Adrenal gland (tissue), 19 donors: ENCODE measurements at regions of chr1 and their contacts with region 1.

Region 1: DNA sequence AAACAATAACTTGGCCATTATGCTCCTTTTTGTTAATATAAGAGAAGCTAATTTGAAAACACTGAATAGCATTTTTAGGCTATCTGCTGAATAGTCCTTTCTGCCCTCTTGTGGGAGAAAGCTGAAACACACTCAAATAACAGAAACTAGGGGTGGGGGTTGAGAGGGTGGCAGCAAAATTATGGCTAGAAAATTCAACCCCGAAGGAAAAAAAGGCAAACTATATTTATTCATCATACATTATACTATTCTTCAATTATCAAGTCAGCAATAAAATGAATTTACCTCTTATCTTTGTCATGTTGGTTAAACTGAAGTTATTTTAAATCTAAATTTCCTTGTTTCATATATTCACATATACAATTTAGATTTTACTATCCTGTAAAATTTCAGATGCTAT is 255.9 kb downstream of the FAF1 start:
- DNase-seq: peak in 2 of 7 donors; percentile 16 to 27
- H3K4me3 ChIP-seq: no peak overlapping the region
- H3K27ac ChIP-seq: no peak overlapping the region
- H3K4me1 ChIP-seq: peaks cover 0 to 6% of the 10 kb centered on the region in 2 donors
- H3K27me3 ChIP-seq: no peaks in the 10 kb centered on the region
- CTCF ChIP-seq: peak; percentile 48 to 74 (median 60)
- POLR2A ChIP-seq: no peak

Region 2: DNA sequence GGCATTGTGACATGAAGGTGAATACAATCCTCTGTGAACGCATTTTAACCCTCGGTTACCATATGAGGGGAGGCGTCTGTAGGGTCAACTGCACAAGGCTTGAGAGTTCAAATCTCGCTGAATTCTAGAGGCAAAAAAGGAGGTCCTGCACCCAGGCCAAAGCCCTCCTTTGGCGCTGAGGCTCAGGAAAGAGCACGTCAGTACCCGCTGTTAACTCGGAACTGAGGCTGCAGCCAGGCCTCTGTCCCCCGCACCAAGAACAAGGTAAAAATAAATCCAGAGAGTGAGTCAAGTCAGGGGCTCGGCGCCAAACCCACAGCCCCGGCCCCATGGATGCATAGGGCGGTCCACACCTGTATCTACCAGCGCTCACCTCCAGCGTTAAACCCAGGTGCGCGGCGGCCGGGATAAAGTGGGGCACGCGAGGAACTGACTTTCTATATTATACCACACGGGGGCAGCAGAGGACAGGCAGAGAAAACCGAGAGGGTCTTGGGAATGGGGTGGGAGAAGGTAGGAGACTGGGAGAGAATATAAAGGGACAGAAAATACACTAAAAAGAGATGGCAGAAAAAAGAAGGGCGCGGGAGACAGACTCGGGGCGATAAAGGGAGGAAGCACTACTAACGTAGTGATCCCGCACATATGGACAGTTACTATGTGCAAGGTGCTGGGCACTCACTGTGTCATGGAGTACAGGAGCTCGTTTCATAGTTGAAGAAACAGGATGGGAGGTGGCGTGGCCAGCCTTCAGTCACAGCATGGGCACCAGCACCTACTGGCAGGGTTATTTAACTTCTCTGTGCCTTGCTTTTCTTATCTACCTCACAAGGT is 335.7 kb before region 1 on chr1:
- intact Hi-C with region 1: loop called in 1 of 2 experiments (anchors 10 kb)
- DNase-seq: peak in 5 of 7 donors; percentile 25 to 58 (median 38)
- H3K4me3 ChIP-seq: no peak overlapping the region
- H3K27ac ChIP-seq: no peak overlapping the region
- H3K4me1 ChIP-seq: peaks cover 0 to 4% of the 10 kb centered on the region in 2 donors
- H3K27me3 ChIP-seq: no peaks in the 10 kb centered on the region
- CTCF ChIP-seq: peak; percentile 60 to 92 (median 80)
- POLR2A ChIP-seq: no peak

Region 3: DNA sequence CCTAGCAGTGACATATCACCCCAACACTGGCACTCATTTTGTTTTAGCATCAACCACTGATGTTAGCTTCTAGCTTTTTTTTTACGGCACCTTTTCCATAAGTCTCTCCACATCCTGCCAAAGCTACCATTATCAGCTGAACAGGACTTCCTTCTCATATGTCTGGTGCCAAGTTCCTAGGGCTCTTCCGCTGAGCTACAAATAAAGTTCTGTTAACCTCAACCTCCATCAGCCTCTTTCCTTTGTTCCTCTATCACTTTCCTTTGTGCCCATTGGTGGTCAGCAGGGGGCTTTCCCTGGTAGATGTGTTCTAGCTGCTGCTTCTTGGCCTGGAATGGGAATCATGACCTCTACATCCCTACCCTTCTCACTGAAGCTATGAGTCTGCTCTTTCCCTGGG is 92.1 kb after region 1 on chr1:
- intact Hi-C with region 1: no loop called
- DNase-seq: no peak
- H3K4me3 ChIP-seq: no peak overlapping the region
- H3K27ac ChIP-seq: no peak overlapping the region
- H3K4me1 ChIP-seq: peaks cover 0 to 9% of the 10 kb centered on the region in 2 donors
- H3K27me3 ChIP-seq: no peaks in the 10 kb centered on the region
- CTCF ChIP-seq: no peak
- POLR2A ChIP-seq: no peak